ENCODE measurements at regions of chr6 and their contacts with region 1.

Region 1: GRCh38 chr6:142692942-142693341 is 252.0 kb downstream of the HIVEP2 start:
- DNase-seq: peak; percentile 63
- H3K4me3 ChIP-seq: no peak overlapping the region
- H3K27ac ChIP-seq: no peak overlapping the region
- H3K4me1 ChIP-seq: no peaks in the 10 kb centered on the region
- H3K27me3 ChIP-seq: no peaks in the 10 kb centered on the region
- CTCF ChIP-seq: peak; percentile 92

Region 2: DNA sequence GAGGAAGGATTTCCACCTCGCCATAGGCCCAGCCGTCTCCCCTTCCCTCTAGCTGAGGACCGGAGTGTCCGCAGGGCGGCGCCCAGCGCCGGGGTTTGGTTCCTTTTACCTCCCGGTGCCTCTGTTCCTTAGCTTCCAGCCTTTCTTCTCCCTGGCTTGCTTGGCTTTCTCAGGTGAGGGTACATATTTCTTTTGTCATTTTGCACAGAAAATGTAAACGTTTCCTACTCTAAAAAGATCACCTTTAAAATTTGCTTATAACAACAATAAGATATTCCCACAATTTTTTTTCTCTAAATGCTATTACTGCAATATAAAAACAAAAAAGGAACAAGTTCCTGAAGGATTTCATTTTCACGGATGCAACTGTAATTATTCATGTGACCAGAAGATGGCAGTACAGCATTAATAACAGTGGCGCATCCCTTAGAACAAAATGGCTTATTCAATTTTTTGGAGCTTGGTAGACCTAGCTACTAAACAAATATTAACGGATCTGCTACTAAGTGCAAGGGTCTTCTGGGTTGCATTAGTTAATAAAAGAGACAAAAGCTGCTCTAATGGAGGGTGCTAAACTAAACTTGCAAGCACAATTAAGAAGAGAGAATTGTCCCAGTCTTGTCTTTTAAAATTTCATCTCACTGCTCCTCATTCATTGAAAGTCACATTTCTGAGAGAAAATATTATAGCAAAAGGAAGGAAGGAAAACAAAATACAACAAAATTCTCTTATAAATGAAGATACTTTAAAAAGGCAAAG is 218.2 kb before region 1 on chr6:
- intact Hi-C with region 1: loop called (anchors 10 kb)
- DNase-seq: peak; percentile 19
- H3K4me3 ChIP-seq: no peak overlapping the region
- H3K27ac ChIP-seq: no peak overlapping the region
- H3K4me1 ChIP-seq: no peaks in the 10 kb centered on the region
- H3K27me3 ChIP-seq: no peaks in the 10 kb centered on the region
- CTCF ChIP-seq: peak; percentile 76

Region 3: DNA sequence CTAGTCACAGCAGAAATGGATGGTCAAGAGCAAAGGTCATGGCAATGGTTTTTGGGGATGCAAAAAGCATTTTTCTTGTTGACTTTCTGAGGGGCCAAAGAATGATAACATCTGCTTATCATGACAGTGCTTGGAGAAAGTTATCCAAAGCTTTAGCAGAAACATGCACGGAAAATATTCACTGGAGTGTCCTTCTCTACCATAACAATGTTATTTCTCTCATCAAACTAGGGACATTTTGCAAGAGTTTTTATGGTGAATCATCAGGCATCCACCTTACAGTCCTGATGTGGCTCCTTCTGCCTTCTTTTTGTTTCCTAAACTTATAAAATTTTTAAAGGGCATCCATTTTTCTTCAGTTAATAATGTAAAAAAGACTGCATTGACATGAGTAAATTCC is 50.3 kb before region 1 on chr6:
- intact Hi-C with region 1: no loop called
- DNase-seq: no peak
- H3K4me3 ChIP-seq: no peak overlapping the region
- H3K27ac ChIP-seq: no peak overlapping the region
- H3K4me1 ChIP-seq: no peaks in the 10 kb centered on the region
- H3K27me3 ChIP-seq: no peaks in the 10 kb centered on the region
- CTCF ChIP-seq: no peak

Region 4: DNA sequence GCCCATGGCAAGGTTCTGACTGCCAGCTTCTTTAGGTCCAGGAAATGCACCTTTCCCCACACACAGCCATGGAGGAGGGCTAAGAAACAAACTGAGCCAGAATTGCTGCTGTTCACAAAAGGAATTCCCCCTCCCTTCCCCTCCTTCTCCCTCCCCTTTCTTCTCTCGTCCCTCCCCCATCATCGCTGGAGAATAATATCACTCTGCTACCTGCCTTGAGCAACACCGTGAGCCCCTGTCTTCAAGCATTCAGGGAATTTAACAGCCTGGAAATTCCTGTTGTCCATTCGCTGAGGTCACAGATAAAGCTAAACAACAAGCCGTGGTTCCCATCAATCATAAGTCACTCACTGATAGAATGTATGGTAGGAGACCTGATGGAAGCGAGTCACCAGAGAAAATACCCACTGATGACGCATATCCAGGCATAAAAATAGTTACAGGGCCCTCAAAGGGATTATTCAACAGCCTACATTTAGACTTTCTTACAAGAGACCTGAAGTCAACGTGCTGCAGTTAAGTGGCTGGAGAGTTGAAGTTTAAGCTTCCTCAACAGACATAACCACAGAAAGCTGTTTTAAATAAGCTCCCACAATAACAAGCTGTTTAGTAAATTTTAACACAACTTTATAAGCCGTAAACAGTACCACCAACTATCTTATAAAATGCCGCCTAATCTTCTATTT is 192.4 kb after region 1 on chr6:
- intact Hi-C with region 1: loop called (anchors 5 kb)
- DNase-seq: no peak
- H3K4me3 ChIP-seq: no peak overlapping the region
- H3K27ac ChIP-seq: peak overlapping the region; percentile 28
- H3K4me1 ChIP-seq: no peaks in the 10 kb centered on the region
- H3K27me3 ChIP-seq: no peaks in the 10 kb centered on the region
- CTCF ChIP-seq: no peak

Region 5: DNA sequence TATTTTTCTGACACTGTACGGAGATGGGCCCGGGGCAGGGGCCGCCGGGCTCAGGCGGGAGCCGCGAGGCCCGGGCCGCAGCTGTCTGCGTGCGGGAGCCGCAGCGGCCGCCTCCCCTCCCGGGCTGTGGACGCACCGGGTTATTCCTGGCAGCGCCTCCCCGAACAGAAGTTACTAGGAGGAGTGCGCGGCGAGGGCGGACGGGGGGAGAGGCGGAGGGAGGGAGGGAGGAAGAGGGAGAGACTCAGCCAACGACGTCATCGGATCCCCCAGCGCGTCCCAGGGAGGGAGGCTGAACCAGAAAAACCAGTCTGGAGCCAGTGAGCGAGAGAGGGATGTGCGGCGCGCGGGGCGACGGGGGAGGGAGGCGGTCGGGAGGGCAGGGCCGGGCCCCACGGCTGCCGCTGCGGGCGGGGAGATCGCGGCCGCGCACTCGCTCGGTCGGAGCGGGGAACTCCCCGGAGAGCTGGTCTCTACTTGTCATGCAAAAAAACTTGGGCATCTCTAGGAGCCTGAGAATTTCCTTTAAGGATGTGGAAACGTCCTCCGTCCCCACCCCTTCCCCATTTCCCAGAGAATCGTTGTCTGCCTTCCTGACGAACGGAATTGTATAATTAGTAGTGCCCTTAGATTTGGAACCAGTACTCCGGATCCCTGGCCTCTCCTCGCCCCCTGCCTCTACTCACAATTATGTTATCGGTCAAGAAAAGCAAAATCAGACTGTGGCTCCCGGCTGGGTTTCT is 253.4 kb after region 1 on chr6:
- intact Hi-C with region 1: loop called (anchors 5 kb)
- DNase-seq: peak; percentile 99
- H3K4me3 ChIP-seq: peak overlapping the region; percentile 74
- H3K27ac ChIP-seq: peak overlapping the region; percentile 97
- H3K4me1 ChIP-seq: no peaks in the 10 kb centered on the region
- H3K27me3 ChIP-seq: no peaks in the 10 kb centered on the region
- CTCF ChIP-seq: no peak

Region 6: GRCh38 chr6:143026696-143027449 is 333.9 kb after region 1 on chr6:
- intact Hi-C with region 1: loop called (anchors 2 kb)
- DNase-seq: peak; percentile 33
- H3K4me3 ChIP-seq: no peak overlapping the region
- H3K27ac ChIP-seq: no peak overlapping the region
- H3K4me1 ChIP-seq: no peaks in the 10 kb centered on the region
- H3K27me3 ChIP-seq: no peaks in the 10 kb centered on the region
- CTCF ChIP-seq: peak; percentile 35

Region 7: GRCh38 chr6:143427109-143427817 is 734.3 kb after region 1 on chr6:
- intact Hi-C with region 1: loop called (anchors 5 kb)
- DNase-seq: peak; percentile 60
- H3K4me3 ChIP-seq: no peak overlapping the region
- H3K27ac ChIP-seq: no peak overlapping the region
- H3K4me1 ChIP-seq: no peaks in the 10 kb centered on the region
- H3K27me3 ChIP-seq: no peaks in the 10 kb centered on the region
- CTCF ChIP-seq: peak; percentile 88